Panc1 (cell line): ENCODE measurements at regions of chr11 and their contacts with region 1.

Region 1: GRCh38 chr11:45974806-45975205 is 52.4 kb downstream of the LARGE2 start:
- DNase-seq: no peak
- ATAC-seq: no peak
- H3K4me3 ChIP-seq: no peak overlapping the region
- H3K27ac ChIP-seq: no peak overlapping the region
- H3K4me1 ChIP-seq: no peaks in the 10 kb centered on the region
- H3K27me3 ChIP-seq: no peaks in the 10 kb centered on the region
- CTCF ChIP-seq: no peak

Region 2: DNA sequence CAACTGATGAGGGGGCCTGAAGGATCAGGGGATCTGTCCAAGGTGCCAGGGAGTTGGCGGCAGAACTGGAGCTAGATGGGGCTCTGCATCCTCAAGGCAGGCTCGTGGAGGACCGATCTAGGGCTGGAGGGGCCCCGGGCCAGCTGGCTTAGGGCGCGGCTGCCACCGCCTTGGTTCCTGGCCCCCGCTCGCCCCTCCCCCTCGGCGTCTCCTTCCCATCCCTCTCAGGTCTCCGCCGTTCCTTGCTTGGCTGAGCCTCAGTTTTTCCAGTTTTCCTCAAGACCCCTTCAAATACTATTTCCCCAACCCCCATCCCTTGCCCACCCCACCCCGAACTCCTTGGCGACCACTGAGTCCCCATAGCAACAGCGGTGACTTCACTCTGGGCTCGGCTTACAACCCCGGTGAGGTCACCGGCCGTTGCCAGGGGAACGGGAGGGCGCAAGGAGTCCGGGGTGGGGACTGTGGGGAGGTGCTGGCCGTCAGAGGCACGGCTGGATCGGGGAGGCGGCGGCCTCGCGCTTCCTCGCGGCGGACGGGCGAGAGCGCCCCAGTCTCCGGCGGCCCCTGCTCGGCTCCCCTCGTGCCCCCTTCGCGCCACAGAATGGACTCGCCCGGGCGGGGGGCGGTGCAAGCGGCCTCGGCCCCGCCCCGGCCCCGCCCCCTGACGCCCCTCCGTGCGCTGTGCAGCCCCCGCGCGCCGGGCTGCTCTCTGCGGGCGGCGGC is 75.2 kb before region 1 on chr11:
- CTCF ChIA-PET with region 1: no interaction called
- POLR2A ChIA-PET with region 1: no interaction called
- in situ Hi-C with region 1: no loop called
- intact Hi-C with region 1: no loop called
- DNase-seq: peak; percentile 17
- ATAC-seq: peak; percentile 87
- H3K4me3 ChIP-seq: peak overlapping the region; percentile 53 to 59
- H3K27ac ChIP-seq: peak overlapping the region; percentile 69; the same call in 1 of the 2 replicates
- H3K4me1 ChIP-seq: peaks cover 6% of the 10 kb centered on the region; the same call in 1 of the 2 replicates
- H3K27me3 ChIP-seq: no peaks in the 10 kb centered on the region
- CTCF ChIP-seq: no peak

Region 3: GRCh38 chr11:46050003-46050461 is 75.2 kb after region 1 on chr11:
- CTCF ChIA-PET with region 1: no interaction called
- POLR2A ChIA-PET with region 1: interaction called, 12 read pairs
- in situ Hi-C with region 1: no loop called
- intact Hi-C with region 1: no loop called
- DNase-seq: no peak
- ATAC-seq: no peak
- H3K4me3 ChIP-seq: no peak overlapping the region
- H3K27ac ChIP-seq: no peak overlapping the region
- H3K4me1 ChIP-seq: no peaks in the 10 kb centered on the region
- H3K27me3 ChIP-seq: no peaks in the 10 kb centered on the region
- CTCF ChIP-seq: no peak